Aorta (tissue), 5 donors: ENCODE measurements at regions of chr15 and their contacts with region 1.

Region 1: GRCh38 chr15:71800835-71801745 is 9.3 kb upstream of the NR2E3 start:
- DNase-seq: no peak
- ATAC-seq: peak; percentile 87
- H3K4me3 ChIP-seq: no peak overlapping the region
- H3K27ac ChIP-seq: no peak overlapping the region
- H3K4me1 ChIP-seq: no peaks in the 10 kb centered on the region
- H3K27me3 ChIP-seq: no peaks in the 10 kb centered on the region

Region 2: DNA sequence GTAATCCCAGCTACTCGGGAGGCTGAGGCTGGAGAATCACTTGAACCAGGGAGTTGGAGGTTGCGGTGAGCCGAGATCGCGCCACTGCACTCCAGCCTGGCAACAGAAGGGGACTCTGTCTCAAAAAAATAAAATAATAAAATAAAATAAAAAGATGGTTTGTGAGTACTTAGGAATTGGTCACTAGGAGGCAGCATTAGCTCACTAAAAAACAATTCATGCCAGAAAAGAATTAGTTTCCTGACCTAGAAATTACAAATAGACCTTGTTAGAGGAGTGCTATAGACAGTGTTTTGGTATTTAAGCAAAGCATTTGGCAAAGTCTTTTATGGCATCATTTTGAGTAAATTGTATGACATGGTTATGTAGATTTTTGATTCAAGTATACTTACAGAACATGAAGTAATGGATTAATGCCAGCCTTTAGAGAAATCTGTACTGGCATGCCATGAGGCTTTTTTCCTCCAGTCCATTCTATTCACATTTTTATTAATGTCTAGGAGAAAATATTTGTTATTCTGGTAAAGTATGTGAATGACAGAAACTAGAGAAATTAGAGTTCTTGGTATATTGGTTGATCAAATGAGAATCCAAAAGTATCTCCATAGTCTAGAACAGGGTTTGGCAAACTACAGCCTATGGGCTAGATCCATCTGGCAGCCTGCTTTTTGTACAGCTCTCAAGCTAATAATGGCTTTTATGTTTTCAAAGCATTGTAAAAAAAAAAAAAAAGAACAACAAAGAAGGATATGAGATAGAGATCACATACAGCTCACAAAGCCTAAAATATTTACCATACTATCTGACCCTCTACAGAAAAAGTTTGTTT is 826.9 kb before region 1 on chr15:
- intact Hi-C with region 1: loop called in 1 of 2 experiments (anchors 5 kb)
- DNase-seq: no peak
- ATAC-seq: no peak
- H3K4me3 ChIP-seq: no peak overlapping the region
- H3K27ac ChIP-seq: no peak overlapping the region
- H3K4me1 ChIP-seq: no peaks in the 10 kb centered on the region
- H3K27me3 ChIP-seq: no peaks in the 10 kb centered on the region

Region 3: GRCh38 chr15:71103102-71103676 is 697.9 kb before region 1 on chr15:
- intact Hi-C with region 1: loop called in 1 of 2 experiments (anchors 10 kb)
- DNase-seq: peak in 1 of 2 donors; percentile 50
- ATAC-seq: peak; percentile 73
- H3K4me3 ChIP-seq: no peak overlapping the region
- H3K27ac ChIP-seq: no peak overlapping the region
- H3K4me1 ChIP-seq: no peaks in the 10 kb centered on the region
- H3K27me3 ChIP-seq: no peaks in the 10 kb centered on the region

Region 4: GRCh38 chr15:71532994-71533393 is 268.1 kb before region 1 on chr15:
- intact Hi-C with region 1: loop called in 1 of 2 experiments (anchors 5 kb)
- DNase-seq: no peak
- ATAC-seq: no peak
- H3K4me3 ChIP-seq: no peak overlapping the region
- H3K27ac ChIP-seq: no peak overlapping the region
- H3K4me1 ChIP-seq: no peaks in the 10 kb centered on the region
- H3K27me3 ChIP-seq: no peaks in the 10 kb centered on the region

Region 5: GRCh38 chr15:71743861-71744382 is 57.2 kb before region 1 on chr15:
- intact Hi-C with region 1: loop called (anchors 2 kb)
- DNase-seq: peak in 1 of 2 donors; percentile 62
- ATAC-seq: no peak
- H3K4me3 ChIP-seq: no peak overlapping the region
- H3K27ac ChIP-seq: peak overlapping the region in 1 of 2 donors; percentile 34
- H3K4me1 ChIP-seq: no peaks in the 10 kb centered on the region
- H3K27me3 ChIP-seq: no peaks in the 10 kb centered on the region